ENCODE measurements at regions of chr13 and their contacts with region 1.

Region 1: DNA sequence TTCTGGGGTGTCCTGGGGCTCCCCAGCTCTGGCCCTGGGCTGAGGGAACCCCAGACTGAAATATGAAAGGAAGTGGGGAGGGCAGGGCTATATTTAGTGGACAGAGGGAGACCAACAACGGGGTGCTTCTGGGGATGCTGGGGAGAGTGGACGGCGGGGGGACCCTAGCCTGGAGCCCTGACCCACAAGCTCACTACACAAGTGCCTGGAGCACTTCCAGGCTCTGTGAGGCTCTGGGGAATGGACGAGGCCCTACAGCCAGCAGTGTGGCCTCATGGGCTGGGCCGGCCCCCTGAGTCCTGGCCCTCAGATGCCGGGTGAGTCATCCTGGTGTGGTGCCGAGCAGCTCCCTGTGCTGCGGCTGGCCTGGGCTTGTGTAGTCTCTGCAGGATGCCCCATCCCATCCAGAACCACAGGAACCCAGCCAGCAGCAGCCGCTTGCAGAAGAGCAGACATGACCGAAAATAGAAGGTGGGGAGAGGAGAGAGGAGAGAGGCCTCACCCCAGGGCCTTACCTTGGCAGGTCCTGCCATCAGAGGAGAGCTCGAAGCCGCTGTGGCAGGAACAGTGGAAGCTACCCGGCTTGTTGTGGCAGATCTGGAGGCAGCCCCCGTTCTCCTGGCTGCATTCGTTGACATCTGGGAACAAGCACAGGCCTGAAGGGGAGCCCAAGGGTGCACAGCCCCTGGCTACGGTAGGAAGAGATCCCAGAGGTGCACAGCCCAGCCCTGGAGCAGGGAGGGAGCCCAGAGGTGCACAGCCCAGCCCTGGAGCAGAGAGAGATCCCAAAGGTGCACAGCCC is 26.1 kb downstream of the GAS6 start:
- DNase-seq: peak; percentile 96 to 99
- ATAC-seq: peak; percentile 87 to 90
- H3K4me3 ChIP-seq: peak overlapping the region; percentile 8 to 37 (median 15)
- H3K27ac ChIP-seq: peak overlapping the region; percentile 94 to 98 (median 96)
- H3K4me1 ChIP-seq: peaks cover 41 to 42% of the 10 kb centered on the region in 2 donors
- H3K27me3 ChIP-seq: no peaks in the 10 kb centered on the region
- CTCF ChIP-seq: no peak
- POLR2A ChIP-seq: peak; percentile 47 to 48

Region 2: GRCh38 chr13:113854238-113855011 is 16.7 kb after region 1 on chr13:
- in situ Hi-C with region 1: no loop called
- intact Hi-C with region 1: loop called (anchors 1 kb)
- DNase-seq: peak in 1 of 2 donors; percentile 54
- ATAC-seq: peak in 1 of 2 donors; percentile 4
- H3K4me3 ChIP-seq: no peak overlapping the region
- H3K27ac ChIP-seq: peak overlapping the region; percentile 79 to 92 (median 83)
- H3K4me1 ChIP-seq: peaks cover 52 to 59% of the 10 kb centered on the region in 2 donors
- H3K27me3 ChIP-seq: no peaks in the 10 kb centered on the region
- CTCF ChIP-seq: no peak
- POLR2A ChIP-seq: no peak

Region 3: GRCh38 chr13:113928685-113929627 is 91.2 kb after region 1 on chr13:
- in situ Hi-C with region 1: no loop called
- intact Hi-C with region 1: loop called (anchors 5 kb)
- DNase-seq: peak; percentile 95 to 99
- ATAC-seq: peak; percentile 81 to 82
- H3K4me3 ChIP-seq: peak overlapping the region in 2 of 4 donors; percentile 5 to 28
- H3K27ac ChIP-seq: peak overlapping the region; percentile 84 to 90 (median 87)
- H3K4me1 ChIP-seq: peaks cover 38 to 40% of the 10 kb centered on the region in 2 donors
- H3K27me3 ChIP-seq: no peaks in the 10 kb centered on the region
- CTCF ChIP-seq: no peak
- POLR2A ChIP-seq: peak in 1 of 2 donors; percentile 8

Region 4: GRCh38 chr13:114298866-114299265 is 461.1 kb after region 1 on chr13:
- in situ Hi-C with region 1: no loop called
- intact Hi-C with region 1: no loop called
- DNase-seq: no peak
- ATAC-seq: no peak
- H3K4me3 ChIP-seq: no peak overlapping the region
- H3K27ac ChIP-seq: no peak overlapping the region
- H3K4me1 ChIP-seq: no peaks in the 10 kb centered on the region
- H3K27me3 ChIP-seq: no peaks in the 10 kb centered on the region
- CTCF ChIP-seq: no peak
- POLR2A ChIP-seq: no peak